Thyroid gland (tissue), 4 donors: ENCODE measurements at regions of chr9 and their contacts with region 1.

Region 1: DNA sequence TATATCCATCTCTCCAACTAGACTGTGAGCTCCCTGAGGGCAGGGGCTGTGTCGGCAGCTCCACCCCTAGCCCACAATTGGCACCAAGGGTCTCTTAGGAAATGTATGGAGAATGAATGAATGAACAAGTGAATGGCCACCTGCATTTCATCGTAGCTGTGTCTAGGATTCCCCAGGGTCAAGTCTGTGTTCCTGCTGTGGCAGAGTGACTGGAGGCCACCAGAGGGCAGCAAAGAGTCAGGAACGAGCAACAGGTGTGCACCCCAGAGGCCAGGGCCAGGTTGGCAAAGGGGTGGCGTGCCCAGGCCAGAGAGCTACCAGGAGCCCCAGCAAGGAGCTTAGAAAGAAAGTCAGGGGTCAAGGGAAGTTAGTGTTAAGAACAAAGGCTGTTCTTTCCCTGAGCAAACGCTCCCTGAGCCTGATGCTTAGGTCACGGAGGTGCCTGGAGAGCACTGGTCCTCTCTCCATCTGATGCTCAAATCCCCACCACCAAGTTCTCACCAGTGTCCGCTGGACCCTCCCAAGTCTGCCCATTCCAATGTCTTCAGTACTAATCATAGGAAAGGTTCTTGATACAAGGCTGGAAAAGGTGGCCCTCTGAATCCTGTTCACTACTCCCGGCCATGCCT is 160.7 kb downstream of the PAX5 start:
- DNase-seq: peak; percentile 58 to 76
- H3K4me3 ChIP-seq: no peak overlapping the region
- H3K27ac ChIP-seq: no peak overlapping the region
- H3K4me1 ChIP-seq: no peaks in the 10 kb centered on the region
- H3K27me3 ChIP-seq: no peaks in the 10 kb centered on the region
- CTCF ChIP-seq: peak; percentile 47 to 82 (median 73)
- POLR2A ChIP-seq: no peak

Region 2: GRCh38 chr9:37339923-37340322 is 466.6 kb after region 1 on chr9:
- intact Hi-C with region 1: loop called (anchors 10 kb)
- DNase-seq: no peak
- H3K4me3 ChIP-seq: no peak overlapping the region
- H3K27ac ChIP-seq: no peak overlapping the region
- H3K4me1 ChIP-seq: no peaks in the 10 kb centered on the region
- H3K27me3 ChIP-seq: no peaks in the 10 kb centered on the region
- CTCF ChIP-seq: no peak
- POLR2A ChIP-seq: no peak

Region 3: GRCh38 chr9:37382161-37382981 is 509.0 kb after region 1 on chr9:
- intact Hi-C with region 1: loop called (anchors 10 kb)
- DNase-seq: no peak
- H3K4me3 ChIP-seq: no peak overlapping the region
- H3K27ac ChIP-seq: no peak overlapping the region
- H3K4me1 ChIP-seq: no peaks in the 10 kb centered on the region
- H3K27me3 ChIP-seq: no peaks in the 10 kb centered on the region
- CTCF ChIP-seq: no peak
- POLR2A ChIP-seq: no peak